ENCODE measurements at regions of chr2 and their contacts with region 1.

Region 1: DNA sequence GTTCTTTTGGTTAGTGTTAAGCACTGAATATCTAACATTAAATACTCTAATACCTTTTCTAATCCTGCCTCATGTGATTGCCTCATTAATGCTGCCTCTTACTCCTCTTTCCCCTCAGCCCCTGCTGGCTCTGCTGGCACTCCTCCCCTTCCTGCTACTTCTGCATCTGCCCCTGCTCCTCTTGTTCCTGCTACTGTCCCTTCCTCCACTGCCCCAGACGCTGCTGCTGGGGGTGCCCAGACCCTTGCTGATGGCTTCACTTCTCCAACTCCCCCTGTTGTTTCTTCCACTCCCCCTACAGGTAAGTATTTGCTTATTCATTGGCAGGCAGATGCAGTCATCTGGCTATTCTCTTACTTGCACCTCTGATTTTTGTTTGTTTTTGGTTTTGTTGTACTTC is 68.5 kb downstream of the ABI2 start:
- DNase-seq: no peak
- ATAC-seq: peak in 2 of 4 donors; percentile 29 to 56
- H3K4me3 ChIP-seq: no peak overlapping the region
- H3K27ac ChIP-seq: no peak overlapping the region
- H3K4me1 ChIP-seq: peaks cover 0 to 5% (median 0%) of the 10 kb centered on the region in 12 donors
- H3K27me3 ChIP-seq: no peaks in the 10 kb centered on the region
- CTCF ChIP-seq: peak in 8 of 12 donors; percentile 10 to 38 (median 24)
- POLR2A ChIP-seq: no peak

Region 2: GRCh38 chr2:203340791-203341487 is 55.7 kb before region 1 on chr2:
- intact Hi-C with region 1: loop called in 1 of 10 experiments (anchors 10 kb)
- DNase-seq: no peak
- ATAC-seq: peak in 3 of 4 donors; percentile 18 to 58 (median 41)
- H3K4me3 ChIP-seq: no peak overlapping the region
- H3K27ac ChIP-seq: peak overlapping the region in 2 of 12 donors; percentile 16 to 32
- H3K4me1 ChIP-seq: peaks cover 0 to 36% (median 11%) of the 10 kb centered on the region in 12 donors
- H3K27me3 ChIP-seq: no peaks in the 10 kb centered on the region
- CTCF ChIP-seq: no peak
- POLR2A ChIP-seq: no peak

Region 3: DNA sequence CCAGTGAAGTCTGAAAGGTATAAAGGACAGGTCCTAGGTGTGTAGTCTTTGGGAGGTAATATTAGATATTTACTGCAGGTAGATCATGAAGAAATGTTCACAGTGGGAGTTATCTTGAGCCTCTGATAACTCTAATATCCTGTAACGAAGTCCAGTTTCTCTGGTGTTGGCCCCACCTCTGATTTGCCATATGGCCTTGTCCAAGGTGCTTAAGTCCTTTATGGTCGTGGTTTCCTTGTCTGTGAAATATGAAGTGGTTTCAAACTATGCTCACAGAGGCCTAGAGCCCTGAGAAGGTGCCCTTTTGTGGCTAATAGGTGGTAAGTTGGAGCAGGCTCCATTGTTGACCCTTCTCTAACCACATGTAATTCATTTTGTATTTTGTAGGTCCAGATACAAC is 730.6 kb after region 1 on chr2:
- intact Hi-C with region 1: no loop called
- DNase-seq: no peak
- ATAC-seq: no peak
- H3K4me3 ChIP-seq: no peak overlapping the region
- H3K27ac ChIP-seq: no peak overlapping the region
- H3K4me1 ChIP-seq: peaks cover 0 to 15% (median 5%) of the 10 kb centered on the region in 12 donors
- H3K27me3 ChIP-seq: no peaks in the 10 kb centered on the region
- CTCF ChIP-seq: no peak
- POLR2A ChIP-seq: no peak